Cardiac septum (tissue), 1 donor: ENCODE measurements at regions of chr18 and their contacts with region 1.

Region 1: GRCh38 chr18:46333431-46334135 is 229.4 kb downstream of the HAUS1 start:
- DNase-seq: peak; percentile 75

Region 2: DNA sequence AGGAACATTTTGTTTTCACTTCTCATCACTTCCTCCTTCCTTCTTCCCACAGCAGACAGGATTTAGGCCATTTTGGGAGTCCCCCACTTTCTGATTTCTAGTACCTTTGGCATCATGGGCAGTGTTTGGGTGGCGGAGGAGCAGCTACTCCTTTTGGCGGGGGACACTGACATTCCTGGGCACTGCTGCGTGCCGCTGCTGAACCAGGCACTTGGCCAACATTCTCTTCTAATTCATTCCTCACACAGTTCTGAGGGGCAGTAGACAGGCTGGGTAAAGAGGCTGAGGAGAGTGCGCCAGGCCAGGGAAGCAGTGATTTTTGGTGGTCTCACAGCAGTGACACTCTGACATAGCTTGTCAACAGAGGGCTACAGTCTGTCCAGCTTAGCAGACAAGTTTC is 53.2 kb after region 1 on chr18:
- intact Hi-C with region 1: loop called (anchors 10 kb)
- DNase-seq: no peak

Region 3: GRCh38 chr18:46411867-46412690 is 78.5 kb after region 1 on chr18:
- intact Hi-C with region 1: loop called (anchors 5 kb)
- DNase-seq: no peak

Region 4: DNA sequence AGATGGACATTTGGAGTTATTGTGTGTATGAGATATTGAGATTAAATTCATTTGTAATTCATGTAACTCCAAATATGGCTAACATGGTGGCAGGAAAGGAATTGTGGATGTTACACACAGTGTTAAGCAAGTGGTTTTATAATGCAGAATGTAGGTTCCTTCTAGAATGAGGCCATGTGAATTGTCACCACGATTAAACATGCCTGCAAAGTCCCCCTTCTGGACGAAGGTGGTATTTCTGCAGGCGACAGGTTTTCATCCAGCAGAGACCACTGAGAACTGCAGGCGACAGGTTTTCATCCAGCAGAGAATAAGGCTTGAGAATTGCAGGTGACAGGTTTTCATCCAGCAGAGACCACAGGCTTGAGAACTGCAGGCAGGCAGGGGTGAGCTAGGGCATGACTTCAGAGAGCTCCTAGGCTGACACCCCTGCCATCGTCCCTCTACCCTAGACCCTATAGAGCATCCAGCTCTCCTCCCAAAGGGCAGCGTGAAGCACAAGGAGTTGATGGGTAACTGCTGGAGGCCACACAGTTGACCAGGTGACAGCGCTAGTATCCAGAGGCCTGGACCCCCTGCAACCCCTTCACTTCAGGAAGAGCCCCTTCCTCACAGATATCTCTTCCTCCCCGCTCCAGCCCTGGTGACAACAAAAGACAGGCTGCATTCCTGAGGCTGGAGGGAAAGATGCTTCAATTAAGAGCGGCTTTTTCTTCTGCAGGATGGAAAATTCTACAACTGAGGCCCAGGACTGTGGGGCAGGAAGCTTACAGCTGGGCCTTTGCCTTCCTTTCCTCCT is 147.7 kb after region 1 on chr18:
- intact Hi-C with region 1: loop called (anchors 10 kb)
- DNase-seq: no peak